ENCODE measurements at regions of chr20 and their contacts with region 1.

Region 1: GRCh38 chr20:8305449-8305978 is 173.4 kb downstream of the PLCB1 start:
- DNase-seq: peak; percentile 38 to 88 (median 65)
- ATAC-seq: peak in 3 of 4 experiments; percentile 76 to 99 (median 95)
- H3K4me3 ChIP-seq: no peak overlapping the region
- H3K4me3 Mint-ChIP-seq: no peak overlapping the region
- H3K27ac ChIP-seq: no peak overlapping the region
- H3K27ac Mint-ChIP-seq: peak overlapping the region in 1 of 2 donors; percentile 15
- H3K4me1 ChIP-seq: peaks cover 0 to 4% of the 10 kb centered on the region in 2 experiments
- H3K4me1 Mint-ChIP-seq: peaks cover 6 to 11% (median 8%) of the 10 kb centered on the region in 3 donors
- H3K27me3 ChIP-seq: no peaks in the 10 kb centered on the region
- H3K27me3 Mint-ChIP-seq: no peaks in the 10 kb centered on the region

Region 2: GRCh38 chr20:8162610-8163009 is 142.9 kb before region 1 on chr20:
- CTCF ChIA-PET with region 1: no interaction called
- POLR2A ChIA-PET with region 1: no interaction called
- DNase-seq: no peak
- ATAC-seq: no peak
- H3K4me3 ChIP-seq: no peak overlapping the region
- H3K4me3 Mint-ChIP-seq: no peak overlapping the region
- H3K27ac ChIP-seq: no peak overlapping the region
- H3K27ac Mint-ChIP-seq: no peak overlapping the region
- H3K4me1 ChIP-seq: no peaks in the 10 kb centered on the region
- H3K4me1 Mint-ChIP-seq: peaks cover 8 to 13% (median 12%) of the 10 kb centered on the region in 3 donors
- H3K27me3 ChIP-seq: no peaks in the 10 kb centered on the region
- H3K27me3 Mint-ChIP-seq: peaks cover 0 to 1% of the 10 kb centered on the region in 2 donors

Region 3: DNA sequence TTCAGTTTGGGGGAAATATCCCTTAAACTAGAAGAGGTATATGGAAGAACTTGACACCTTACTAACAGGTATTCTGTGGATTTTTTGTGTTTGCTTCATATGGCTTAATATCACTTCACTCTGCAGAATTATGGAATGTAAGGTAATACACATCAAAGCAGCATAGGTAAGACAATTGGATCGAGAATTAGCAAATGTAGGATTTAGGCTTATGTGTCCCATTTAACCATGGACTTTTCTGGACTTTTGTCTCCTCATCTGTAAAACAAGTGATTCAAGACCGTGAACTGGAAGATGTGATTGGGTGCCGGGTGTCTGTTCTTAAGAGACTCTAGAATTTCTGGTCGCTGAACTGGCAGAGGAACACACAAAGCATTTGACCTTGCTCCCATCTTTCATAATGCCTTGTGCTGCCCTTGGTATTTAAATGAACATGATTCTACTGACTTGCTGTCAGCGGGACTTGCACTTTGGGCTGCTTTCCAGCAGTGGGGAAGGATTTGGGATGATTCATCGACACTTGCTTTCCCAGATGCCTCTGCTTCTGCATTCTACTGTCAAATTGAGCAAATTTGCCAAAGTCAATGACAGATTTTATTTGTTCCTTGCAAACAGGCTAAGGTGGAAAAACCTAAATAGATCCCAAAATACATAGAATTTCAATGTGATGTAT is 26.4 kb after region 1 on chr20:
- CTCF ChIA-PET with region 1: no interaction called
- POLR2A ChIA-PET with region 1: no interaction called
- DNase-seq: no peak
- ATAC-seq: no peak
- H3K4me3 ChIP-seq: no peak overlapping the region
- H3K4me3 Mint-ChIP-seq: no peak overlapping the region
- H3K27ac ChIP-seq: no peak overlapping the region
- H3K27ac Mint-ChIP-seq: no peak overlapping the region
- H3K4me1 ChIP-seq: no peaks in the 10 kb centered on the region
- H3K4me1 Mint-ChIP-seq: no peaks in the 10 kb centered on the region
- H3K27me3 ChIP-seq: no peaks in the 10 kb centered on the region
- H3K27me3 Mint-ChIP-seq: no peaks in the 10 kb centered on the region

Region 4: GRCh38 chr20:8344106-8344505 is 38.6 kb after region 1 on chr20:
- CTCF ChIA-PET with region 1: no interaction called
- POLR2A ChIA-PET with region 1: interaction called in 1 of 2 experiments, 15 read pairs
- DNase-seq: no peak
- ATAC-seq: no peak
- H3K4me3 ChIP-seq: no peak overlapping the region
- H3K4me3 Mint-ChIP-seq: no peak overlapping the region
- H3K27ac ChIP-seq: no peak overlapping the region
- H3K27ac Mint-ChIP-seq: no peak overlapping the region
- H3K4me1 ChIP-seq: no peaks in the 10 kb centered on the region
- H3K4me1 Mint-ChIP-seq: no peaks in the 10 kb centered on the region
- H3K27me3 ChIP-seq: no peaks in the 10 kb centered on the region
- H3K27me3 Mint-ChIP-seq: no peaks in the 10 kb centered on the region

Region 5: GRCh38 chr20:8647961-8648441 is 342.5 kb after region 1 on chr20:
- CTCF ChIA-PET with region 1: no interaction called
- POLR2A ChIA-PET with region 1: no interaction called
- DNase-seq: no peak
- ATAC-seq: no peak
- H3K4me3 ChIP-seq: no peak overlapping the region
- H3K4me3 Mint-ChIP-seq: no peak overlapping the region
- H3K27ac ChIP-seq: no peak overlapping the region
- H3K27ac Mint-ChIP-seq: no peak overlapping the region
- H3K4me1 ChIP-seq: no peaks in the 10 kb centered on the region
- H3K4me1 Mint-ChIP-seq: no peaks in the 10 kb centered on the region
- H3K27me3 ChIP-seq: no peaks in the 10 kb centered on the region
- H3K27me3 Mint-ChIP-seq: no peaks in the 10 kb centered on the region